ENCODE measurements at regions of chr16 and their contacts with region 1.

Region 1: GRCh38 chr16:84925092-84925772 is 86.1 kb downstream of the ZDHHC7 start:
- DNase-seq: peak; percentile 23 to 74 (median 57)
- ATAC-seq: peak; percentile 71
- H3K4me3 ChIP-seq: no peak overlapping the region
- H3K4me3 Mint-ChIP-seq: no peak overlapping the region
- H3K27ac ChIP-seq: no peak overlapping the region
- H3K27ac Mint-ChIP-seq: no peak overlapping the region
- H3K4me1 ChIP-seq: no peaks in the 10 kb centered on the region
- H3K4me1 Mint-ChIP-seq: peaks cover 0 to 4% (median 0%) of the 10 kb centered on the region in 7 donors
- H3K27me3 ChIP-seq: no peaks in the 10 kb centered on the region
- H3K27me3 Mint-ChIP-seq: no peaks in the 10 kb centered on the region

Region 2: DNA sequence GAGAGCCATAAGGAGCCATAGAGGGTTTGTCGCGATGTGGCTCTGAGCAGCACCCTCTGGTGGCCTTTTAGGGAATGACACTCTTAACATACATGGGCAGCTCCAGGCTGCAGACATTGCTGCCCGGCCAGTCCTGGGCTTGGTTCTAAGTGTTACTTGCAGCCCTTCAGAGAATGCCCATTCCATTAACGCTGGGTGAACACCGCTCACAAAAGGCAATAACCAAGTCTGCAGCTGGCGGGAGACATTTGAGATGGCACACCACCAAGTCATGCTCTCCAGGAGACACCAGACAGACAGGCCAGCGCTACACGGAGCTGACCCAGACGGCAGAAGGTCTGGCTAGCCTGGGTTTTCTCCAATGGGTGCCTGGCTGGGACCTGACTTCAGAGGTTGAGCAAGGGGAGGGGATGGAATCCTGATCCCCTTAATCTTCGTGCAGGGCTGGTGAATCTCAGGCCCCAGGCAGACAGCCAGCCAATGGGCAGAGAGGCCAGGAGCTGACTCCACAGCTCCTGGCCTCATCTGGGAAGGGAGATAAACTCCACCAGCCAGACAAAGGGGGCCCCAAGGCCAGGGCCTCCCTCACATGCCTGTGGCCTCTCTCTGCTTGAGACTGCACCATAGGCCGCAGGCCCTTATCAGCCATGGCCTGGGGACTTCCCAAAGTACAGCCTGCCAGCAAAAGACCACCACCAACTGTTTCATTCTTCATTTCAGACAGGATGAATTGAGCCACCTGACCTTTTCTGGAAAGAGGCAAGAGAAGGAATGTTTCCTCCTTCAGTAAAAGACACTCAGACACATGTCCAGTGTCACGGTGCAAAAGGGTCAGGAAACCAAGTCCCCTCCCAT is 27.3 kb after region 1 on chr16:
- CTCF ChIA-PET with region 1: interaction called, 4 read pairs
- POLR2A ChIA-PET with region 1: no interaction called
- intact Hi-C with region 1: loop called (anchors 1 kb)
- DNase-seq: peak; percentile 28 to 80 (median 68)
- ATAC-seq: peak; percentile 94
- H3K4me3 ChIP-seq: no peak overlapping the region
- H3K4me3 Mint-ChIP-seq: no peak overlapping the region
- H3K27ac ChIP-seq: no peak overlapping the region
- H3K27ac Mint-ChIP-seq: peak overlapping the region in 1 of 9 donors; percentile 9
- H3K4me1 ChIP-seq: peaks cover 0 to 3% of the 10 kb centered on the region in 2 donors
- H3K4me1 Mint-ChIP-seq: peaks cover 0 to 12% (median 4%) of the 10 kb centered on the region in 7 donors
- H3K27me3 ChIP-seq: no peaks in the 10 kb centered on the region
- H3K27me3 Mint-ChIP-seq: peaks cover 0 to 4% (median 0%) of the 10 kb centered on the region in 5 donors

Region 3: GRCh38 chr16:84970447-84971127 is 45.4 kb after region 1 on chr16:
- CTCF ChIA-PET with region 1: interaction called, 14 read pairs
- POLR2A ChIA-PET with region 1: interaction called, 3 read pairs
- intact Hi-C with region 1: loop called (anchors 1 kb)
- DNase-seq: peak; percentile 60 to 79 (median 74)
- ATAC-seq: peak; percentile 92
- H3K4me3 ChIP-seq: no peak overlapping the region
- H3K4me3 Mint-ChIP-seq: no peak overlapping the region
- H3K27ac ChIP-seq: no peak overlapping the region
- H3K27ac Mint-ChIP-seq: peak overlapping the region in 3 of 9 donors; percentile 9 to 78 (median 46)
- H3K4me1 ChIP-seq: peaks cover 0 to 6% of the 10 kb centered on the region in 2 donors
- H3K4me1 Mint-ChIP-seq: peaks cover 0 to 8% (median 4%) of the 10 kb centered on the region in 7 donors
- H3K27me3 ChIP-seq: no peaks in the 10 kb centered on the region
- H3K27me3 Mint-ChIP-seq: no peaks in the 10 kb centered on the region

Region 4: DNA sequence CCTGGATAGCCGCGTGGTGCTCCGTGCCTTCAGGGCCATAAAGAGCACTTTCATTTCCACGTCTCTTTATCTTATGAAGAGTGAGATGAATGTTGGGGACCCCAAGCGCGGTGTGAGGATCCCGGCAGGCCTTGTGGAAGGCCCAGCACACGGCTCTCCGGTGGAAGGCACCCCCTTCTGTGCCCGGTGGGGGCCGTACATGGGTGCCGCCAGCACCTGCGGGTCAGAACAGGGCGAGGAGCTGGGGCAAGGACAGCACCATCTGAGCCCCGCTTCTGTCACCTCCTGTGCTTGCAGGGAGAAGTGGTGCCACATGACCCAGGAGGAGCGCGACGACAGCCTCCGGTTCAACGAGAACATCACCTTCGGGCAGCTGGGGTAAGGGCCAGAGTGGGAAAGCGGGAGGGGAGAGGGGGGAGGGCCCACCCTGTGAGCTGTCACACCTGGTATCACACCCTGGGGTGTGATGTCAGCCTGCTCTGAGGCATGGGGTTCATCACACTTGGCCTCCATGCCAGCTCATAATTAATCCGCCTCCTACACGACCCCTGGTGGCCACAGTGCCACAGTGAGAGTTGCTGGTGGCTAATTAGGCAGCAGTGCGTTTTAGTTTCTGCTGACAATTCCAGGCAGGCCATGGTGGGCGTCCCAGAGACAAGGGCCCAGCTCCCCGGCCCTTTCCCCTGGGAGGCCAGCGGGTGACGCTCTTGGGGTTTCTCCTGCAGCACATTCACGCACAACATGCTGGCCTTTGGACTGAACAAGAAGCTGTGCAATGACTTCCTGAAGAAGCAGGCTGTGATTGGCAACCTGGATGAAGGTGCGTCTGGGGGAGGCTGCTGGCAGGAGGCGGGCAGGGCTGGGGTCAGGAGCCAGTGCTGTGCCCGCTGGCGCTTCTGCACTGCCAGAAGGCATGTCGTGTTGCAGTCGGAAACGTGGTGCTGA is 161.4 kb after region 1 on chr16:
- CTCF ChIA-PET with region 1: interaction called, 3 read pairs
- POLR2A ChIA-PET with region 1: no interaction called
- intact Hi-C with region 1: loop called in 1 of 2 experiments (anchors 2 kb)
- DNase-seq: peak; percentile 44 to 78 (median 74)
- ATAC-seq: peak; percentile 88
- H3K4me3 ChIP-seq: no peak overlapping the region
- H3K4me3 Mint-ChIP-seq: no peak overlapping the region
- H3K27ac ChIP-seq: no peak overlapping the region
- H3K27ac Mint-ChIP-seq: peak overlapping the region in 3 of 9 donors; percentile 23 to 59 (median 43)
- H3K4me1 ChIP-seq: no peaks in the 10 kb centered on the region
- H3K4me1 Mint-ChIP-seq: peaks cover 6 to 31% (median 15%) of the 10 kb centered on the region in 7 donors
- H3K27me3 ChIP-seq: no peaks in the 10 kb centered on the region
- H3K27me3 Mint-ChIP-seq: peaks cover 0 to 2% (median 0%) of the 10 kb centered on the region in 5 donors